AG04449 (cell line): ENCODE measurements at regions of chr4 and their contacts with region 1.

Region 1: GRCh38 chr4:40149960-40150385 is 46.9 kb upstream of the RHOH start:
- DNase-seq: no peak
- H3K4me3 ChIP-seq: no peak overlapping the region
- CTCF ChIP-seq: peak; percentile 72

Region 2: DNA sequence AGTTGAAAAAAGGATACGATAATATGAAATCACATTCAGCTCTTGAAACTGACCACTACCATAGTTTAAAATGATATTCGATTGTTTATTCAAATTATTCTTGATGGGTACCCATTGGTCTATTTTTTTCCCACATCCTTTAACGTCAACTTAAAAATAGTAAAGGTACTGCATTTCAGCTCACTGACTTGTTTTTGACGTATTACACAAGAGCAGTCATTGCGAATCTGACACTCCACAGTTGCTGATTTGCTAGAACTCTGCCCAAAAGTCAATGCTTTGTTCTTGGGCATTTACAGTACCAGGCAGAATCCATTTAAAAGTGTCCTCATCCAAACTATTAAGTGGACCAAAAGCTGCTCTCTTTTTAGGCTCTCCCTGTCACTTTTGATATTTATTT is 171.1 kb before region 1 on chr4:
- CTCF ChIA-PET with region 1: no interaction called
- POLR2A ChIA-PET with region 1: no interaction called
- DNase-seq: no peak
- H3K4me3 ChIP-seq: no peak overlapping the region
- CTCF ChIP-seq: no peak

Region 3: DNA sequence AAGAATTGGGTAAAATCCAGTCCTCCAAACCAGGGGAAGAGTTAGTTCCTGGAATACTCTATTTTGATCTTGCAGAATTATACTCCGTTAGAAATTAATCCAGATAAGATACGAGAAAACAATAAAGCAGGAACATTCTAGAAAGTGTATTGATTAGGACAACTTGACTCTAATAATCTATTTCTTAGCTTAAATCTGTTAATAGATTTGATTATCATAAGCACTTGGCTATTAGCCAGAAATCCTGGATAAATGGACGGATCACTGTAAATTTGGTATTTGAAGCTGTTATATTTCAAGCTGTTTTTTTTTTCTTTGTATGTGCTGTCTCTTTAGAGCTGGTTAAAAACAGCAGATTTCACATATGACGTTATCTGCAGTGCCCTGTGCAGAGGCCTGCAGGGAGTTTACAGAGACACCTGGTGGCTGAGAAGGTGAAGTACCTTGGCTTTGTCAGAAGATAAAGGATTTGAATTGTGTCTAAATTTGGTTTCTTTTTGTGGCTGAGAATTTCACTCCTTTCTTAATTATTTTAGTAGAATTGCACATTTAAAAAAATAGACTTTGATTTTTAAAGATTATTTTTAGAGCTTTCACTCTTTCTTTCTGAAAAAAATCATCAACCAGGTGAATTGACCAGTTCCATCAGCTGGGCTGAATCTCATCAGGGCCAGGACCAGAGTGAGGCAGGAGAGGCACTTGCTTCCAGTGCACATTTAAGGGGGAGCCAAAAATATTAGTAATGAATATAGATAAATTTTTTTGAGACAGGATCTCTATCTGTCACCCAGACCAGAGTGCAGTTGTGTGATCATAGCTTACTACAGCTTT is 175.4 kb after region 1 on chr4:
- CTCF ChIA-PET with region 1: interaction called, 11 read pairs
- POLR2A ChIA-PET with region 1: no interaction called
- DNase-seq: no peak
- H3K4me3 ChIP-seq: no peak overlapping the region
- CTCF ChIP-seq: peak; percentile 75